Activated T-helper 2 cell treated with anti-CD3 and anti-CD28 coated beads, Interferon-gamma antibody, Interleukin-2, Interleukin-4, amounts not matched to agents 10 μg/mL and 5 μg/mL and 100 μg/mL, durations not matched to agents 14 hours and 24 hours and 36 hours (primary cell): ENCODE measurements at regions of chr1 and their contacts with region 1.

Region 1: DNA sequence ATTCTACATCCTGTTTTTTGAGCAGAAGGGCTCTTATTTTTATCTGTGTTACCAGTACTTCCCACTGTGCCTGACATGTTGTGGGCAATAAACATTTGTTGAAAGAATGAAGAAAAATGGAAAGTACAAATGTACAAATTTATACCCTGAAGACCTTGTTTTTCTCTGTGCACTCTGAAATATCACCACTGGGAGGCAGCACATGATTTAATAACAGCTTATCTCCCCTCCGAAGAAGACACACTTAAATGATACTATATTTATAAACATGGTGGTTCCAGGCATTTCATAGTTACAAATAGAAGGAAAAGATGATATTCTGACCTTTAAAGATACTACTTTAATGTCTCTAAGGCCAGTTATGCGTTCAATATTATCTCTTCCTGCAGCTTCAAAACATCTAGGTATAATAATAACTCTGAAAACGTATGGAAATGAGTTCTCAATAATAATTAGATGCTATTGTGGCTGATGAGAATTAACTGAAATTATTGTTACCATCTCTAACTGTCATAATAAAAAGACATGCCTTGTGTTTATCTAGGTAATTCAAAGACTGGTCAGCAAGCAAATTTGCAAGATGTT is 12.8 kb downstream of the DYNLT5 start:
- DNase-seq: no peak
- H3K4me3 Mint-ChIP-seq: no peak overlapping the region
- H3K27ac Mint-ChIP-seq: no peak overlapping the region
- H3K4me1 Mint-ChIP-seq: peaks cover 18% of the 10 kb centered on the region
- H3K27me3 Mint-ChIP-seq: no peaks in the 10 kb centered on the region

Region 2: GRCh38 chr1:66663730-66664129 is 101.4 kb before region 1 on chr1:
- intact Hi-C with region 1: no loop called
- DNase-seq: no peak
- H3K4me3 Mint-ChIP-seq: no peak overlapping the region
- H3K27ac Mint-ChIP-seq: no peak overlapping the region
- H3K4me1 Mint-ChIP-seq: no peaks in the 10 kb centered on the region
- H3K27me3 Mint-ChIP-seq: peaks cover 9% of the 10 kb centered on the region

Region 3: DNA sequence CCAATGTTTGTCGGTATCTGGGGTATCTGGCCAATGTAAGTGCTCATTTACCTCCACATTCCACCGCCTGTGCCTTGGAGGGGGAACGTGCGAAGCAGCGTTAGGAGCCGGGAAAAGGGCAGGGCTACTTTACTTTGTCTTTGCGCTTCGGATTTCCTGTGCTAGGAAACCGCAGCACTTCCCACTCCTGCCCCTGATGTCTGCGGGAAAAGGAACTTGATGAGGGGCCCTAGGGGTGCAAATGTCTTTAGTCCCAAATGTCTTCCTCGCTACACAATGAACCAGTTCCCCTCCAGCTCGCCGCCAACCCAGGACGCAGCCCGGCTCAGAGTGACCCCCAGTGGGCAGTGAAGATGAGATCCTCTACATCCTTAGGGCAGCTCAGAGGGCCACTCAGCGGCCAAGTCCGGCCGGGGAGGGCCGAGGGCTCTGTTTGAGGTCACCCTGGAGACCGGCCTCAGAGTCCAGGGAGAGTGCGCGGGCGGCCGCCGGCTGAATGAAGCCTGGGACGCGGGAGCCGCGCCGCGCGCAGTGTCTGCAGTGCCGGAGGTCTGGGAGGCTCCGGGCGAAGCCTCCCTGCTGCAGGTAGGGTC is 13.0 kb before region 1 on chr1 and contains the start of gene DYNLT5:
- intact Hi-C with region 1: no loop called
- DNase-seq: no peak
- H3K4me3 Mint-ChIP-seq: peak within 1 kb of the TSS; percentile 40
- H3K27ac Mint-ChIP-seq: no peak within 1 kb of the TSS
- H3K4me1 Mint-ChIP-seq: peaks cover 12% of the 10 kb centered on the region
- H3K27me3 Mint-ChIP-seq: peaks cover 76% of the 10 kb centered on the region
- total RNA-seq, gene DYNLT5: not detected in 2 replicates

Region 4: GRCh38 chr1:66824771-66825170 is 59.7 kb after region 1 on chr1:
- intact Hi-C with region 1: loop called (anchors 10 kb)
- DNase-seq: no peak
- H3K4me3 Mint-ChIP-seq: no peak overlapping the region
- H3K27ac Mint-ChIP-seq: no peak overlapping the region
- H3K4me1 Mint-ChIP-seq: no peaks in the 10 kb centered on the region
- H3K27me3 Mint-ChIP-seq: no peaks in the 10 kb centered on the region

Region 5: GRCh38 chr1:66981679-66982078 is 216.6 kb after region 1 on chr1:
- intact Hi-C with region 1: loop called (anchors 2 kb)
- DNase-seq: peak; percentile 41
- H3K4me3 Mint-ChIP-seq: peak overlapping the region; percentile 69
- H3K27ac Mint-ChIP-seq: peak overlapping the region; percentile 69
- H3K4me1 Mint-ChIP-seq: peaks cover 27% of the 10 kb centered on the region
- H3K27me3 Mint-ChIP-seq: no peaks in the 10 kb centered on the region

Region 6: DNA sequence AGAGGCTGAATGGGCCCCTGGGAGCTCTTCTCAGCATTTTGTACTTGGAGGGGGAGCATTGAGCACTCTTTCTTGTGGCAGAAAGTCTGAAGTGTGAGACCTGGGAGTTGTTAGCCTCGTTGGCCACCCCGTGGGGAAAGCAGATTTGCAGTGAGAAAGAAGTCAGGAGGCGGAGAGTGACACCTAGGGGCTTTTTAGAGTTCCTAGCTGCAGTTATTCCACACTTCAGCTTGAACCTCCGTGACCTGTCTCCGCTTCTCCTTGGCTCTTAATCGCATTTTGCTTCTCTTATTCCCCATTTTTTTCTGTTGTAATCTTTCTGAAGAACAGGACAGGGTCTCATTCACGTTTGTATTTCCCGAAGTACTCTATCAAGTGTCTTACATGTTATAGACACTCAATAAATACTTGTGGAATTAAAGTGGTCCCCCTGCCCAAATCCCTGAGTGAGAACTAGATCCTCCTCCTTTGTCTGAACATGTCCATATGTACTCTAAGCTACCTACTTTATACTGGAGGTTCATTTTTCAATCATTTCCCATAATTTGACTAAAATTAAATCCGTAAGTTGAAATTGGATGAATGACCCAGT is 384.2 kb after region 1 on chr1:
- intact Hi-C with region 1: loop called (anchors 1 kb)
- DNase-seq: peak; percentile 31
- H3K4me3 Mint-ChIP-seq: no peak overlapping the region
- H3K27ac Mint-ChIP-seq: no peak overlapping the region
- H3K4me1 Mint-ChIP-seq: peaks cover 33% of the 10 kb centered on the region
- H3K27me3 Mint-ChIP-seq: peaks cover 25% of the 10 kb centered on the region

Region 7: DNA sequence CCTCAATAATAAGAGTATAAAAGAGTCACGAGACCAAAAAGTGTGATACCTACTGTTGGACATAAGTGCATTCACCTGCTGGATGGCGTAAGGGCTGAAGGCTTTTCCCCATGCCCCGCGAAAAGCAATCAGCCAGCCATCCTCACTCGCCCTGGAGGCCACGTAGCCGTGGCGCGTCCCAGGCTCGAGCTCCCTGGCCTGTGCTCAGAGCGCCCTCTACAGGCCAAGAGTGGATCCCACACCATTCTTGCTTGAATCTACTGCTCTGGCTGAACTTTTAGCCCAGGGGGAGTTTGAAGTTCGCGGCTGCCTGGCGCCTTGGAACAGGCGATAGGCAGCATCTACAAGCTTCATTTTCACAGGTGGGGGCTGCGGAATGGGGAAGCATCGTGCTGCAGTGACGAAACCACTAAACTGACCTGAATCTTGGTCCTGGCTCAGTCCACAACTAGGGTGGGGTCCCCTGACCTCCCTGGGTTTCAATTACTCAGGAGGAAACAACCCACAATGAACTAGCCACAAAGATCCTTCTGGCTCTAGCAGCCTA is 735.4 kb after region 1 on chr1:
- intact Hi-C with region 1: loop called (anchors 2 kb)
- DNase-seq: peak; percentile 80
- H3K4me3 Mint-ChIP-seq: no peak overlapping the region
- H3K27ac Mint-ChIP-seq: no peak overlapping the region
- H3K4me1 Mint-ChIP-seq: peaks cover 8% of the 10 kb centered on the region
- H3K27me3 Mint-ChIP-seq: peaks cover 4% of the 10 kb centered on the region